Right ventricle myocardium superior (tissue), 1 donor: ENCODE measurements at regions of chr2 and their contacts with region 1.

Region 1: GRCh38 chr2:9205963-9206948 is at the start of gene ASAP2:
- DNase-seq: peak; percentile 83
- ATAC-seq: peak; percentile 85
- total RNA-seq, gene ASAP2: 10.7 TPM

Region 2: GRCh38 chr2:9333591-9334171 is 127.4 kb after region 1 on chr2:
- intact Hi-C with region 1: loop called (anchors 5 kb)
- DNase-seq: no peak
- ATAC-seq: peak; percentile 76

Region 3: DNA sequence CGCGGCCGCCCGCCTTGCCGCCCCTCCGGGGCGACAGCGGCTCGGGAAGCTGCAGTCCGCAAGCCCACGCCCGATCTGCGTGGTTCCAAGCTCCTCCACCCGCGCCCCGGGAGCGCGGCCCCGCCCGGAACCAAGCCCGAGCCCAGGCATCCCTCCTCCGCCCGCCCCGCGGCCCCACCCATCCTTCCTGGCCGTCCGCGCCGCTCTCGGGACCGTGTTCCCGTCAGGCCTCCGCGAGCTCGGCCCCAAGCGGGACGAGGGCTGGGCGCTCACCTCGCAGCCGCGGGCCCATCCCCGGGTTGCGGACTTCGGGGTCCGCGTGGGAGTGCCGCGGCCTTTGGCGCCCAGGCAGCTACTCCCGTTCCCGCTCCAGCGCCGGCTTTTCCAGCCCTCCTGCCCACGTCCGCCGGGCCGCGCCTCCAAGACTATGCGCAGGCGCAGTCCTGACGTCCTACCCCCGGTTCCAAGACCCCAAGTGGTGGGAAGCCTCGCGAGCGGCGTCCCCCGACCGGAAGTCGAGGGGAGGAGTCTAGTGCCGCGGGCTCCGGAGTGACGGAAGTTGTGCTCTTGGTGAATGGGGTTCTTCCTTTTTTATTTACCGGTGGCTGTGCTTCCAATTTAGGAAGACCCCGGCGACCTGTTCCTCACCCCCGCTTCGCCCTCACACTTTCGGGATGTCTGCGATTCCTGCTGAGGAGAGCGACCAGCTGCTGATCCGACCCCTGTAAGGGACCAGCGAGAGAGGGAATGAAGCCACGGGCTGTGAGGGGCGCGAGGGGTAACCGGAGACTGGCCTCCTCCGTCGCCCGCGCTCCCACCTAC is 217.1 kb after region 1 on chr2 and contains the starts of genes CPSF3 and ITGB1BP1:
- intact Hi-C with region 1: loop called (anchors 10 kb)
- DNase-seq: peak; percentile 98
- ATAC-seq: peak; percentile 98
- total RNA-seq, gene CPSF3: 14.0 TPM
- total RNA-seq, gene ITGB1BP1: 97.0 TPM

Region 4: GRCh38 chr2:10141736-10142642 is 935.7 kb after region 1 on chr2:
- intact Hi-C with region 1: no loop called
- DNase-seq: no peak
- ATAC-seq: peak; percentile 63